ENCODE measurements at regions of chr7 and their contacts with region 1.

Region 1: GRCh38 chr7:50266635-50267386 is 37.7 kb upstream of the IKZF1 start:
- DNase-seq: peak; percentile 82
- H3K4me3 Mint-ChIP-seq: peak overlapping the region; percentile 70
- H3K27ac Mint-ChIP-seq: peak overlapping the region; percentile 98
- H3K4me1 Mint-ChIP-seq: peaks cover 89% of the 10 kb centered on the region
- H3K27me3 Mint-ChIP-seq: no peaks in the 10 kb centered on the region

Region 2: DNA sequence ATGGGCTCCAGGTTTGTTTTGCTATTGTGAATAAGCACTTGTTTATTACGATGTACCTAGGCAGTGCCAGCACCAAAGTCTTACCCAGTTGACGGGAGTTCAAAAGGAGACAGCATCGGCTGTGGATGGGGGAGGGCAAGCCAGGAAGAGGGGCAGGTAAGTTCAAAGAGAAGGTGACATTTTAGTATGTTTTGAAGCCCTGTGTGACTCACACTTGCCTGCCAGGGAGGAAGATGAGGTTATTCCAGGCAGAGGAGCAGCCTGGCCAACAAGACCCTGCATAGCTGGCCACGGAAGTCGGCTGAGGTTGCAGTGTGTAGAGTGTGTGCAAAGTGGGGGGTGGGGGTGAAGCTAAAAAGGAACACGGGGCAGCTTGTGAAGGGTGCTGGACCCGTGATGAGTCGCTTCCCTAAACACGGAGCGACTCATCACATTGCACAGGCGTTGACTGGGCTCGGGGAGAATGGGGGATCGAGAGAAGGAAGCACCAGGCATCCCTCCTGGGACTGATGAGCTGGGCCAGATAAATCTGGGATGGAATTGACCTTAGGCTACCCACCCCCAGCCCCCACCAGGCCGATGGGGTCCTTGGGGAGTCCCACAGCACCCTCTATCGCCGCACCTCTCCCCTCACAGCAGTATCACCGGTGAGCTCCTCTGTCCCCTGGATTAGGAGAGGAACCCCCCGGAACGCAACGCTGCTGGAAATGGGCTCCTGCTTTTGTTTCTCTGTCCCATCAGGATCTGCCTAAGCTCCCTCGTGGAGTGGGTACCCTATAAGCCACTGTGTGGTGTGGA is 60.2 kb before region 1 on chr7:
- intact Hi-C with region 1: loop called (anchors 1 kb)
- DNase-seq: peak; percentile 65
- H3K4me3 Mint-ChIP-seq: peak overlapping the region; percentile 68
- H3K27ac Mint-ChIP-seq: peak overlapping the region; percentile 93
- H3K4me1 Mint-ChIP-seq: peaks cover 98% of the 10 kb centered on the region
- H3K27me3 Mint-ChIP-seq: no peaks in the 10 kb centered on the region

Region 3: DNA sequence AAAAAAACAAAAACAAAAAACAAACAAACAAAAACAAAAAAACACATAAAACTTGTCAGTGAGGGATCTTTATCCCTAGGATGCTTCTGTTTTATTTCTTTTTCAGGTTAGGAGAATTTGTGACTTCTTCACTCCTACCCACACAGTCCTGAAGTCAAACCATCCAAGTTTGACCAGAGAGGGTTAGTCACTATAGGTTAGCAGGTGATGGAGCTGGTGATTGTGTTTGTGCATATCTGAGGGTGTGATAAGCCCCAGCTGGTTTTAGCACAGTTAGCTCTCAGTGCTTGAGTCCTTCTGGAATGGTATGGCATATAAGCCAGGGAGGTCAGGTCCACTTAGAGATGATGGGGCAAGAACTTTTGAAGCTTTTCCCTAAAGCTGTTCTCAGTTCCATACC is 26.0 kb after region 1 on chr7:
- intact Hi-C with region 1: loop called (anchors 1 kb)
- DNase-seq: no peak
- H3K4me3 Mint-ChIP-seq: no peak overlapping the region
- H3K27ac Mint-ChIP-seq: peak overlapping the region; percentile 24
- H3K4me1 Mint-ChIP-seq: peaks cover 35% of the 10 kb centered on the region
- H3K27me3 Mint-ChIP-seq: peaks cover 8% of the 10 kb centered on the region

Region 4: GRCh38 chr7:50335795-50336754 is 69.3 kb after region 1 on chr7:
- intact Hi-C with region 1: loop called (anchors 1 kb)
- DNase-seq: peak; percentile 71
- H3K4me3 Mint-ChIP-seq: no peak overlapping the region
- H3K27ac Mint-ChIP-seq: no peak overlapping the region
- H3K4me1 Mint-ChIP-seq: peaks cover 33% of the 10 kb centered on the region
- H3K27me3 Mint-ChIP-seq: no peaks in the 10 kb centered on the region

Region 5: GRCh38 chr7:50397320-50397970 is 130.6 kb after region 1 on chr7:
- intact Hi-C with region 1: loop called (anchors 1 kb)
- DNase-seq: peak; percentile 56
- H3K4me3 Mint-ChIP-seq: peak overlapping the region; percentile 21
- H3K27ac Mint-ChIP-seq: peak overlapping the region; percentile 92
- H3K4me1 Mint-ChIP-seq: peaks cover 74% of the 10 kb centered on the region
- H3K27me3 Mint-ChIP-seq: no peaks in the 10 kb centered on the region

Measured in activated T-helper 1 cell treated with anti-CD3 and anti-CD28 coated beads, Interleukin-12 subunit alpha, Interleukin-12 subunit beta, Interleukin-2, Interleukin-4 antibody, amounts not matched to agents 30 ng/mL and 10 ng/mL and 1 ng/mL, durations not matched to agents 14 hours and 24 hours and 36 hours (primary cell).